Activated CD4-positive, alpha-beta memory T cell treated with anti-CD3 and anti-CD28 coated beads, Interleukin-2, amount 10 ng/mL, durations not matched to agents 7 days and 5 days (primary cell): ENCODE measurements at regions of chr14 and their contacts with region 1.

Region 1: GRCh38 chr14:69611201-69612011 is at the start of gene SUSD6:
- DNase-seq: peak; percentile 91
- H3K4me3 Mint-ChIP-seq: peak within 1 kb of the TSS; percentile 96
- H3K27ac Mint-ChIP-seq: peak within 1 kb of the TSS; percentile 97
- H3K4me1 Mint-ChIP-seq: peaks cover 57% of the 10 kb centered on the region
- H3K27me3 Mint-ChIP-seq: no peaks in the 10 kb centered on the region
- total RNA-seq, gene SUSD6: 63.4 to 65.2 TPM

Region 2: GRCh38 chr14:69398053-69398817 is 213.2 kb before region 1 on chr14 and contains the starts of genes ERH and SLC39A9:
- CTCF ChIA-PET with region 1: no interaction called
- POLR2A ChIA-PET with region 1: interaction called, 11 read pairs
- DNase-seq: peak; percentile 95
- H3K4me3 Mint-ChIP-seq: peak within 1 kb of the TSS; percentile 92
- H3K27ac Mint-ChIP-seq: peak within 1 kb of the TSS; percentile 93
- H3K4me1 Mint-ChIP-seq: peaks cover 67% of the 10 kb centered on the region
- H3K27me3 Mint-ChIP-seq: no peaks in the 10 kb centered on the region
- total RNA-seq, gene ERH: 281 to 295 TPM
- total RNA-seq, gene SLC39A9: 46.1 to 47.2 TPM

Region 3: DNA sequence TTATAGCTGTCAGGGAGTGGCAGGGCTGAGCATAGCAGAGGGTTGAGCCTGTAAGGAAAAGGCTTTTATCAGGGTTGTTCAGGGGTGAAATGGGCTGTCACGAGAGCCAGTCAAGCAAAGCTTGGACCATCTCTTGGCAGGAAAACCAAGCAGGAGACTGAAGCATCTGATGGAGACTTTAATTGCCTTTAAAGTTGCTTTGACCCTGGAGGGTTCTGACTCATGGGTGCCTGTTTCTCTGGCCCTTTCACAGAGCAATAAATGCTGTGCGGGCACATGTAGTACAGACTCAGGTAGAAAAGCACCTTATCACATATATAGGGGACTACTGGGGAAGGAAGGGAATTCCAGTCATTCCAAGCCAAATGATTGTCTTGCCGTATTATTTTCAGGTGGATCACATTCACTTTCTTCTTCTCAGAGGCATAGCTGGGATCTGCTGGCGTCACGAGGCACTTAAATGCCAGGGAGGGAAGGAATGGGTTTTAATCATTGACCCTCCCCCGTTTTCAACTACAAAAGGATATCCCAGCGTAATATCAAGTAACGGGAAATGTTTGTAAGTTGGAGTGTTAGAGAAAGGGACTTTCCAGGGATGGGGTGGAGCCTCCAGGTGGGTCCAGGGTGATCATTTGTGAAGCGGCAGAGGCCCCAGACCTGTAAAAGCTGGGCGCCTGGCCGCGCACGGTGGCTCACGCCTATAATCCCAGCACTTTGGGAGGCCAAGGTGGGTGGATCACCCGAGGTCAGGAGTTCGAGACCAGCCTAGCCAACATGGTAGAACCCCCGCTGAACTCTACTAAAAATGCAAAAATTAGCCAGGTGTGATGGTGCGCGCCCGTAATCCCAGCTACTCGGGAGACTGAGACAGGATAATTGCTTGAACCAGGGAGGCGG is 92.0 kb before region 1 on chr14:
- CTCF ChIA-PET with region 1: no interaction called
- POLR2A ChIA-PET with region 1: no interaction called
- DNase-seq: no peak
- H3K4me3 Mint-ChIP-seq: no peak overlapping the region
- H3K27ac Mint-ChIP-seq: no peak overlapping the region
- H3K4me1 Mint-ChIP-seq: no peaks in the 10 kb centered on the region
- H3K27me3 Mint-ChIP-seq: peaks cover 20% of the 10 kb centered on the region

Region 4: DNA sequence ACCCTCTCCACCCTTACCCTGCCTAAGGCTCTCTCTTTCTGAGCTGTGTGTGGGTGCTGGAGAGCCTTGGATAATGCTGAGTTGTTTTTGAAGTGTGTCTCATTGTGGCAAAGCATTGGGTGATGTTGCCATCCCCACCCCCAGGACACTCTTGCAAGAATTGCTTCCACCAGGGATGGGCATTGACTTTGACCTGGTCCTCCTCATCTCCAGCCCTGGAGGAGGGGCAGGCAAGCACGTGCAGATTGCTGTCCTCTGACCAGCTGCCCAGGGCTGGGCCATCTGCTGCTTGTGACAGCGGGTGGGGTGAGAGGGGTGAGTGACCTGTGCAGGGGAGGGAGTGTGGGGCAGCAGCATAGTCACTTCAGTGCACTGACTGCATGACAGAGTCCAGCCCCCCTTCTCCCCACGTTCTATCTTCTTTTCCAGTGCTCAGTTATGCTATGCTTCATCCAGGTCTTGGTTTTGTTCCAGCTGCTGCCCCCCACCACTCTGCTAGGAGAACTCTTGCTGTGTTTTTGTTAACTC is 26.2 kb after region 1 on chr14:
- CTCF ChIA-PET with region 1: interaction called, 3 read pairs
- POLR2A ChIA-PET with region 1: interaction called, 118 read pairs
- DNase-seq: no peak
- H3K4me3 Mint-ChIP-seq: peak overlapping the region; percentile 50
- H3K27ac Mint-ChIP-seq: peak overlapping the region; percentile 89
- H3K4me1 Mint-ChIP-seq: peaks cover 83% of the 10 kb centered on the region
- H3K27me3 Mint-ChIP-seq: no peaks in the 10 kb centered on the region

Region 5: GRCh38 chr14:69667938-69668335 is 56.5 kb after region 1 on chr14:
- CTCF ChIA-PET with region 1: interaction called, 4 read pairs
- POLR2A ChIA-PET with region 1: interaction called, 32 read pairs
- DNase-seq: no peak
- H3K4me3 Mint-ChIP-seq: peak overlapping the region; percentile 53
- H3K27ac Mint-ChIP-seq: peak overlapping the region; percentile 79
- H3K4me1 Mint-ChIP-seq: peaks cover 91% of the 10 kb centered on the region
- H3K27me3 Mint-ChIP-seq: no peaks in the 10 kb centered on the region

Region 6: GRCh38 chr14:69685716-69686115 is 74.3 kb after region 1 on chr14:
- CTCF ChIA-PET with region 1: interaction called, 10 read pairs
- POLR2A ChIA-PET with region 1: interaction called, 35 read pairs
- DNase-seq: peak; percentile 60
- H3K4me3 Mint-ChIP-seq: peak overlapping the region; percentile 47
- H3K27ac Mint-ChIP-seq: peak overlapping the region; percentile 88
- H3K4me1 Mint-ChIP-seq: peaks cover 80% of the 10 kb centered on the region
- H3K27me3 Mint-ChIP-seq: no peaks in the 10 kb centered on the region

Region 7: GRCh38 chr14:69726761-69727511 is 115.5 kb after region 1 on chr14:
- CTCF ChIA-PET with region 1: interaction called, 18 read pairs
- POLR2A ChIA-PET with region 1: interaction called, 17 read pairs
- DNase-seq: peak; percentile 84
- H3K4me3 Mint-ChIP-seq: peak overlapping the region; percentile 66
- H3K27ac Mint-ChIP-seq: peak overlapping the region; percentile 22
- H3K4me1 Mint-ChIP-seq: peaks cover 46% of the 10 kb centered on the region
- H3K27me3 Mint-ChIP-seq: no peaks in the 10 kb centered on the region